ENCODE measurements at regions of chr5 and their contacts with region 1.

Region 1: GRCh38 chr5:137629646-137630045 is 106.2 kb downstream of the KLHL3 start:
- DNase-seq: peak; percentile 38
- H3K4me3 ChIP-seq: no peak overlapping the region
- H3K27ac ChIP-seq: no peak overlapping the region
- H3K4me1 ChIP-seq: no peaks in the 10 kb centered on the region
- H3K27me3 ChIP-seq: no peaks in the 10 kb centered on the region
- CTCF ChIP-seq: peak; percentile 83 to 98

Region 2: GRCh38 chr5:137619191-137619870 is 10.3 kb before region 1 on chr5:
- CTCF ChIA-PET with region 1: interaction called, 10 read pairs
- dilution Hi-C with region 1: no loop called
- in situ Hi-C with region 1: no loop called
- intact Hi-C with region 1: no loop called
- DNase-seq: peak; percentile 49
- H3K4me3 ChIP-seq: no peak overlapping the region
- H3K27ac ChIP-seq: no peak overlapping the region
- H3K4me1 ChIP-seq: peaks cover 29% of the 10 kb centered on the region
- H3K27me3 ChIP-seq: no peaks in the 10 kb centered on the region
- CTCF ChIP-seq: no peak

Region 3: GRCh38 chr5:137688210-137688840 is 58.7 kb after region 1 on chr5:
- CTCF ChIA-PET with region 1: no interaction called
- dilution Hi-C with region 1: no loop called
- in situ Hi-C with region 1: no loop called
- intact Hi-C with region 1: no loop called
- DNase-seq: no peak
- H3K4me3 ChIP-seq: no peak overlapping the region
- H3K27ac ChIP-seq: no peak overlapping the region
- H3K4me1 ChIP-seq: no peaks in the 10 kb centered on the region
- H3K27me3 ChIP-seq: no peaks in the 10 kb centered on the region
- CTCF ChIP-seq: no peak

Region 4: DNA sequence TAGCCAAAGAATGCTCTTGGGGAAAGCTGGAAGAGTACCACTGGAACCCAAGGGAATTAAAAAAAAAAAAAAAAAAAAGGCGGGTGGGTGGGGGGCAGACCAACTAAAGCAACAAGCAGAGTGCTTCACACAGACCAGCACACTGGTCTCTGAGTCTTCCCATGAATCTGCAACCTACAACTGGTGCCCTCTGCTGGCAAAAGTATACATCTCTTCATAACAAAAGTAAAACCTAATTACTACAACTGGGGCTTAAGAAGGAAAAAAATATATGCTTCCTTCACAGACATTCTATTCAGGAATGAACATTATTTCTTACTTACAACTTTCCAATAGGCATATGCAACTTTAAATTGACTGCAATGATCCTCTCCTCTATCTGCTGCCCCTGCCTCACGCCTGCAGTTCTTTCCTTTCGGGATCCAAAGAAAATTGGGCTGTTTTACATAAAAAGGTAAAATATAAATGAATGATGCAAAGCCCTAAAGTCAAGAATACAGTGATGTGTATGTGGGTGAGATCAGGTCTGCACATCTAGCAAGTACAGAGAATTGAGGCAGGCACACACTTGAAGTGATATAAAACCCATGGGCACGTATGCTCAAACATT is 113.5 kb after region 1 on chr5:
- CTCF ChIA-PET with region 1: interaction called, 29 read pairs
- dilution Hi-C with region 1: no loop called
- in situ Hi-C with region 1: no loop called
- intact Hi-C with region 1: loop called (anchors 1 kb)
- DNase-seq: peak; percentile 51
- H3K4me3 ChIP-seq: no peak overlapping the region
- H3K27ac ChIP-seq: no peak overlapping the region
- H3K4me1 ChIP-seq: no peaks in the 10 kb centered on the region
- H3K27me3 ChIP-seq: no peaks in the 10 kb centered on the region
- CTCF ChIP-seq: peak; percentile 57 to 67

Region 5: GRCh38 chr5:138035605-138036537 is 406.2 kb after region 1 on chr5:
- CTCF ChIA-PET with region 1: no interaction called
- dilution Hi-C with region 1: no loop called
- in situ Hi-C with region 1: loop called in 1 of 2 experiments (anchors 25 kb)
- intact Hi-C with region 1: loop called (anchors 10 kb)
- DNase-seq: peak; percentile 77
- H3K4me3 ChIP-seq: no peak overlapping the region
- H3K27ac ChIP-seq: no peak overlapping the region
- H3K4me1 ChIP-seq: peaks cover 10% of the 10 kb centered on the region
- H3K27me3 ChIP-seq: no peaks in the 10 kb centered on the region
- CTCF ChIP-seq: peak; percentile 83 to 88

Region 6: DNA sequence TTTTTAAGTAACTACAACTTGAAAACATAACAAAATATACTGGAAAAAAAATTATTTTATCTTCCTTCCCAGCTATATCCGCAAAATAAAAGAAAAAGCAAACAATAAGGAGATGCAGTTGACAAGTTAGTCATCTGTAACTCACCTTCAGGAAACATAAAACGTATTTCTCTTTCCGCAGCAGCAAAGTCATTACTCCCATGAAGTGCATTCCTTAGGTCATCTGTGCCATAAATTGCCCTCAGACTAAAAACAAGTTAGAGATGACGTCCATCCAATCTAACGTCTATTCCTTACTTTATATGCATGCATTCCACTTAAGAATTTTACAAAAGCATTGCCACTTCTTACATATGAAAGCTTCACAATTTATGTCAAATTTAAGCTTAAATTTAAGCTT is 498.7 kb after region 1 on chr5:
- CTCF ChIA-PET with region 1: no interaction called
- dilution Hi-C with region 1: no loop called
- in situ Hi-C with region 1: loop called in 1 of 2 experiments (anchors 25 kb)
- intact Hi-C with region 1: loop called (anchors 2 kb)
- DNase-seq: no peak
- H3K4me3 ChIP-seq: no peak overlapping the region
- H3K27ac ChIP-seq: no peak overlapping the region
- H3K4me1 ChIP-seq: no peaks in the 10 kb centered on the region
- H3K27me3 ChIP-seq: no peaks in the 10 kb centered on the region
- CTCF ChIP-seq: no peak

Region 7: GRCh38 chr5:138282920-138283742 is 653.5 kb after region 1 on chr5:
- CTCF ChIA-PET with region 1: no interaction called
- dilution Hi-C with region 1: no loop called
- in situ Hi-C with region 1: no loop called
- intact Hi-C with region 1: loop called (anchors 5 kb)
- DNase-seq: peak; percentile 37
- H3K4me3 ChIP-seq: no peak overlapping the region
- H3K27ac ChIP-seq: no peak overlapping the region
- H3K4me1 ChIP-seq: no peaks in the 10 kb centered on the region
- H3K27me3 ChIP-seq: no peaks in the 10 kb centered on the region
- CTCF ChIP-seq: peak; percentile 40 to 72